Activated CD4-positive, alpha-beta memory T cell treated with anti-CD3 and anti-CD28 coated beads, Interleukin-2, amount 10 ng/mL, durations not matched to agents 7 days and 5 days (primary cell): ENCODE measurements at regions of chr6 and their contacts with region 1.

Region 1: GRCh38 chr6:138109042-138109997 is 2.1 kb upstream of the PERP start:
- DNase-seq: peak; percentile 84
- H3K4me3 Mint-ChIP-seq: peak overlapping the region; percentile 2
- H3K27ac Mint-ChIP-seq: no peak overlapping the region
- H3K4me1 Mint-ChIP-seq: peaks cover 32% of the 10 kb centered on the region
- H3K27me3 Mint-ChIP-seq: peaks cover 17% of the 10 kb centered on the region

Region 2: DNA sequence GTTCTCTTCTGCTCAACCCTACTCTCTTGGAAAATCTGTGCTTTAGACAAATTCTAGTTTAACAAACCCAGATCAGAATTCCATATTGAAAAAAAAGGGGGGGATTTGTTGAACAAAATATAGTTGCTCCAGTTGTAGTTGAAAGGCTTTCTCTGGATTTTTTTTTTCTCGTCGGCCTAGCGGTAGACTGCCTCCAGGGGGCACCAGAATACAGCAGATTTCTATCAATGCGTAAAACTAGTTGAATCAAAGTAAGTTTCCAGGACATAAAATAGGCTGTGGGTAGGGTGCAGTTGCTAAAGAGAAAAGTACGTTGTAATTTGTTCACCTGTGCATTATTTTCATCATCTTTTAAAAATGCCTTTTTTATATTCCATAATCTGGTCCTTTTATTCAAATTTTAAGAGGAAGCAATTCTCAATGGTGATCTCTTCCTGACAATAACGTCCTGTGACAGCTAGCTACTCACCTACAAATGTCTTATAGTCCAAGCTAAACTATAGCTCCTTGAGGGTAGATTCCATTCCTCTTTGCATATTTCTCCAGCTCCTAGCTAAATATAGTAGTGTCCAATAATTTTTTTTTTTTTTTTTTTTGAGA is 107.5 kb before region 1 on chr6:
- CTCF ChIA-PET with region 1: interaction called, 29 read pairs
- POLR2A ChIA-PET with region 1: interaction called, 5 read pairs
- DNase-seq: peak; percentile 65
- H3K4me3 Mint-ChIP-seq: no peak overlapping the region
- H3K27ac Mint-ChIP-seq: no peak overlapping the region
- H3K4me1 Mint-ChIP-seq: peaks cover 12% of the 10 kb centered on the region
- H3K27me3 Mint-ChIP-seq: no peaks in the 10 kb centered on the region

Region 3: GRCh38 chr6:138078491-138078890 is 30.8 kb before region 1 on chr6:
- CTCF ChIA-PET with region 1: no interaction called
- POLR2A ChIA-PET with region 1: no interaction called
- DNase-seq: no peak
- H3K4me3 Mint-ChIP-seq: no peak overlapping the region
- H3K27ac Mint-ChIP-seq: no peak overlapping the region
- H3K4me1 Mint-ChIP-seq: no peaks in the 10 kb centered on the region
- H3K27me3 Mint-ChIP-seq: peaks cover 26% of the 10 kb centered on the region